ENCODE measurements at regions of chr16 and their contacts with region 1.

Region 1: GRCh38 chr16:129075-129474 is 9.4 kb downstream of the NPRL3 start:
- DNase-seq: no peak
- H3K4me3 Mint-ChIP-seq: no peak overlapping the region
- H3K27ac Mint-ChIP-seq: no peak overlapping the region
- H3K4me1 Mint-ChIP-seq: peaks cover 7% of the 10 kb centered on the region
- H3K27me3 Mint-ChIP-seq: no peaks in the 10 kb centered on the region
- CTCF ChIP-seq: no peak

Region 2: GRCh38 chr16:117379-118365 is 11.4 kb before region 1 on chr16:
- CTCF ChIA-PET with region 1: interaction called, 20 read pairs
- POLR2A ChIA-PET with region 1: no interaction called
- intact Hi-C with region 1: no loop called
- DNase-seq: peak; percentile 69
- H3K4me3 Mint-ChIP-seq: no peak overlapping the region
- H3K27ac Mint-ChIP-seq: no peak overlapping the region
- H3K4me1 Mint-ChIP-seq: peaks cover 13% of the 10 kb centered on the region
- H3K27me3 Mint-ChIP-seq: no peaks in the 10 kb centered on the region
- CTCF ChIP-seq: peak; percentile 69